ENCODE measurements at regions of chr4 and their contacts with region 1.

Region 1: GRCh38 chr4:121656269-121656641 is 40.5 kb downstream of the ANXA5 start:
- DNase-seq: peak in 7 of 10 donors; percentile 20 to 74 (median 45)
- H3K4me3 ChIP-seq: no peak overlapping the region
- H3K27ac ChIP-seq: no peak overlapping the region
- H3K27me3 ChIP-seq: no peaks in the 10 kb centered on the region
- CTCF ChIP-seq: peak in 47 of 56 donors; percentile 13 to 69 (median 38)

Region 2: GRCh38 chr4:121370729-121371325 is 285.4 kb before region 1 on chr4:
- intact Hi-C with region 1: loop called (anchors 5 kb)
- DNase-seq: peak in 1 of 10 donors; percentile 66
- H3K4me3 ChIP-seq: no peak overlapping the region
- H3K27ac ChIP-seq: no peak overlapping the region
- H3K27me3 ChIP-seq: peaks cover 0 to 15% (median 0%) of the 10 kb centered on the region in 45 donors
- CTCF ChIP-seq: peak; percentile 53 to 88 (median 72)

Region 3: GRCh38 chr4:121428721-121429120 is 227.5 kb before region 1 on chr4:
- intact Hi-C with region 1: no loop called
- DNase-seq: no peak
- H3K4me3 ChIP-seq: no peak overlapping the region
- H3K27ac ChIP-seq: no peak overlapping the region
- H3K27me3 ChIP-seq: peaks cover 0 to 5% (median 0%) of the 10 kb centered on the region in 45 donors
- CTCF ChIP-seq: no peak

Region 4: GRCh38 chr4:121462660-121463261 is 193.5 kb before region 1 on chr4:
- intact Hi-C with region 1: loop called in 1 of 2 experiments (anchors 5 kb)
- DNase-seq: peak in 1 of 10 donors; percentile 49
- H3K4me3 ChIP-seq: no peak overlapping the region
- H3K27ac ChIP-seq: no peak overlapping the region
- H3K27me3 ChIP-seq: peaks cover 0 to 19% (median 0%) of the 10 kb centered on the region in 45 donors
- CTCF ChIP-seq: peak; percentile 44 to 76 (median 65)

Measured in dorsolateral prefrontal cortex (tissue), 120 donors.